Mammary epithelial cell (primary cell): ENCODE measurements at regions of chr12 and their contacts with region 1.

Region 1: GRCh38 chr12:96516472-96517430 is 27.4 kb downstream of the CFAP54 start:
- DNase-seq: peak; percentile 56
- H3K4me3 ChIP-seq: no peak overlapping the region
- H3K27ac ChIP-seq: no peak overlapping the region
- H3K4me1 ChIP-seq: no peaks in the 10 kb centered on the region
- H3K27me3 ChIP-seq: no peaks in the 10 kb centered on the region
- CTCF ChIP-seq: peak; percentile 51 to 58

Region 2: DNA sequence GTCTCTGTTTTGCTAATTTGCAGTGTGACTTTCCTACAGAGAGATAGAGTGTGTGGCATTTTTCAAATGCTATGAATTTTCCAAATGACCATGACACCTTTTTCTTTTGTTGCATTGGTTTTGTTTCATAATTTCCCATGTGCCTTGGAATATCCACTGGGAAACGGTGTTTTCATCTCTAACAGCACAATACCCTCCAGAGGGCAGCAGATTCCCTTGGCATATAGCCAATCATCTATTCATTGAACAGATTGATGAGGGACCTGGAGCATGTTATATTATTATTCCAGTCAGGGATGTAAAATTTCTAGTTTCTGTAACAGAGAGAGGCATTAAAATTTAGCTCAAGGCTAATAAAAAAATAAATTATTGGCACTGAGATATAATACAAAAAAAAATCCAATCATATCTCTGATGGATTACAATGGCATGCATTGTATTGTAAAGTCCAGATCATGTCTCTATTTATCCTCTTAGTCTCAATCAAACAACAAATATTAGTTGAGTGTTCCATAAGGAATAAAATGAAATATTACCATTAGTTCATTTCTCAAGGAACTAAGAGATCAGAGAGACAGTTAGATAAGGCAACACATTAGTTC is 696.5 kb before region 1 on chr12:
- CTCF ChIA-PET with region 1: no interaction called
- dilution Hi-C with region 1: no loop called
- in situ Hi-C with region 1: no loop called
- intact Hi-C with region 1: loop called (anchors 2 kb)
- DNase-seq: peak; percentile 41
- H3K4me3 ChIP-seq: no peak overlapping the region
- H3K27ac ChIP-seq: no peak overlapping the region
- H3K4me1 ChIP-seq: no peaks in the 10 kb centered on the region
- H3K27me3 ChIP-seq: peaks cover 3% of the 10 kb centered on the region
- CTCF ChIP-seq: peak; percentile 53 to 72

Region 3: DNA sequence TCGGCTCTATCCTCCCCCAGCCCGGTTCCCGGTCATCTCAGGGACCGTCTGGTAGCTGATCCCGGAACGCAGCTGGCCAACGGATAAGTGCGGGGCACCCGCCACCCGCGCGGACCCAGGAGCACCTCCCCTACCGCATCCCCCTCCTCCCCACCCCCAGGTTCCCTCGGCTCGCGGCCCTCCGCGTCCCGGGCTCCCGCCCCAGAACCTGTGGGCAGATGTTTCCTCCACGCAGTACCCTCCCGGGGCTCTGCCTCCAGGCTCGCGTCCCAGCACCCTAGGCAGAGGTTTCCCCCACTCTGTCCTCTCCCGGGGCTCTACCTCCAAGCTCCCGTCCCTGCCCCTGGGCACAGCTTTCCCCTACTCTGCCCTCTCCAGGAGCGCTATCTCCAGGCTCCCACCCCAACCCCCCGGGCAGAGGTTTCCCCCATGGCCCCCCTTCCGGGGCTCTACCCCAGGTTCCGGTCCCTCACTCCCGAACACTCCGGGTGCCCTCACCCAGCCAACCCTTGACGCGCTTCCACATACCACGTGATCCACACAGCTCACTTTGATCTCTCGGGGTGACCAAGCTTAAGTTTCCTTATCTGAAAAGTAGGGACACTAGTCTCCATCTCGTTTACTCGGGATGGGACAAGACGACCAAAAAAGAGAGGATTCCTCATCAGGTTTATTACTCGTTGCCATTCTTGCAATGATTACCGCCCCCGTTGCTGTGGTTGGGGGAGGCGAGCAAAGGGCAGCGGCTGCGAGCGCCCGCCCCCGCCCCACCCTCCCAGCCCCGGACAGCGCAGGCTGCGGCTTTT is 574.0 kb before region 1 on chr12 and contains the start of gene CCDC38:
- CTCF ChIA-PET with region 1: no interaction called
- dilution Hi-C with region 1: no loop called
- in situ Hi-C with region 1: loop called in 1 of 2 experiments (anchors 25 kb)
- intact Hi-C with region 1: no loop called
- DNase-seq: peak; percentile 77
- H3K4me3 ChIP-seq: peak within 1 kb of the TSS; percentile 57 to 85 (median 74)
- H3K27ac ChIP-seq: peak within 1 kb of the TSS; percentile 59
- H3K4me1 ChIP-seq: peaks cover 4% of the 10 kb centered on the region
- H3K27me3 ChIP-seq: no peaks in the 10 kb centered on the region
- CTCF ChIP-seq: no peak
- total RNA-seq, gene CCDC38: 0.17 TPM in 1 of 2 donors, not detected in the other

Region 4: DNA sequence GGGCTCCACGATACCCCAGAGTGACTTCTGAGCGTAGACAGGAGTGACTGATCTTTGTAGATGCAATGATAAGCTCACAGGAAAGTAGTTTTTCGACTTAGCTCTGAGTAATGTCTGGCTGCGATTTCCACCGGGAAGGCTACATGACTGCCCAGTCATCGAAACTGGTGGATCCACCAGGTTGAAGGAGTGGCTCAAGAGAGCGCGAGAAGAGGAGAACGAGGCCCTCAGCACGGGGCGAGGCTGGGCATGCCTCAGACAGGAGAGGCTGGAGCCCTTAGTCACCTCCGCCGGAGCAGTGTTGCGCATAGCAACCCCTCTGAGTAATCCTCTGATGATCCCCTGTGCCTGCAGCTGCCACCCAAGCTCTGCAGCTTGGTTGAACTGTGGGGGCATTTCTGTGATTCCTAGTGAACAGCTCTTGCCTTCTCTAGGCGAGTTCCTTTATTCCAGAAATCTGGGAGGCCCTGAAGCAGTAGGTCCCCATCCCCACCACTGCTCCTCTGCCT is 297.0 kb before region 1 on chr12:
- CTCF ChIA-PET with region 1: interaction called, 13 read pairs
- dilution Hi-C with region 1: no loop called
- in situ Hi-C with region 1: loop called in 1 of 2 experiments (anchors 25 kb)
- intact Hi-C with region 1: loop called (anchors 1 kb)
- DNase-seq: peak; percentile 100
- H3K4me3 ChIP-seq: peak overlapping the region; percentile 30 to 41 (median 38)
- H3K27ac ChIP-seq: peak overlapping the region; percentile 100
- H3K4me1 ChIP-seq: peaks cover 57% of the 10 kb centered on the region
- H3K27me3 ChIP-seq: no peaks in the 10 kb centered on the region
- CTCF ChIP-seq: no peak

Region 5: DNA sequence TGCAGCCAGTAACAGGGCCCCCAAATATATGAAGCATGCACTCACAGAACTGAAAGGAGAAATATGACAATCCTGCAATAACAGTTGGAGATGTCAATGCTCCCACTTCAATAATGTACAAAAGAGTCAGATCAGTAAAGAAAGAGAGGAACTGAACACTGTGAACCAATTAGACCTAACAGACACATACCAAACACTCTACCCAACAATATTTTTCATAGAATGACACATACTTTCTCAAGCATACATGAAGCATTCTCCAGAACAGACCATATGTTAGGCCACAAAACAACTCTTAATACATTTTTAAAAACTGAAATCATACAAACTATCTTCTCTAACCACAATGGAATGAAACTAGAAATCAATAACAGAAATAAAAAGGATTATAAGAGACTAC is 242.4 kb before region 1 on chr12:
- CTCF ChIA-PET with region 1: no interaction called
- dilution Hi-C with region 1: no loop called
- in situ Hi-C with region 1: no loop called
- intact Hi-C with region 1: loop called (anchors 10 kb)
- DNase-seq: peak; percentile 24
- H3K4me3 ChIP-seq: no peak overlapping the region
- H3K27ac ChIP-seq: no peak overlapping the region
- H3K4me1 ChIP-seq: no peaks in the 10 kb centered on the region
- H3K27me3 ChIP-seq: no peaks in the 10 kb centered on the region
- CTCF ChIP-seq: no peak

Region 6: DNA sequence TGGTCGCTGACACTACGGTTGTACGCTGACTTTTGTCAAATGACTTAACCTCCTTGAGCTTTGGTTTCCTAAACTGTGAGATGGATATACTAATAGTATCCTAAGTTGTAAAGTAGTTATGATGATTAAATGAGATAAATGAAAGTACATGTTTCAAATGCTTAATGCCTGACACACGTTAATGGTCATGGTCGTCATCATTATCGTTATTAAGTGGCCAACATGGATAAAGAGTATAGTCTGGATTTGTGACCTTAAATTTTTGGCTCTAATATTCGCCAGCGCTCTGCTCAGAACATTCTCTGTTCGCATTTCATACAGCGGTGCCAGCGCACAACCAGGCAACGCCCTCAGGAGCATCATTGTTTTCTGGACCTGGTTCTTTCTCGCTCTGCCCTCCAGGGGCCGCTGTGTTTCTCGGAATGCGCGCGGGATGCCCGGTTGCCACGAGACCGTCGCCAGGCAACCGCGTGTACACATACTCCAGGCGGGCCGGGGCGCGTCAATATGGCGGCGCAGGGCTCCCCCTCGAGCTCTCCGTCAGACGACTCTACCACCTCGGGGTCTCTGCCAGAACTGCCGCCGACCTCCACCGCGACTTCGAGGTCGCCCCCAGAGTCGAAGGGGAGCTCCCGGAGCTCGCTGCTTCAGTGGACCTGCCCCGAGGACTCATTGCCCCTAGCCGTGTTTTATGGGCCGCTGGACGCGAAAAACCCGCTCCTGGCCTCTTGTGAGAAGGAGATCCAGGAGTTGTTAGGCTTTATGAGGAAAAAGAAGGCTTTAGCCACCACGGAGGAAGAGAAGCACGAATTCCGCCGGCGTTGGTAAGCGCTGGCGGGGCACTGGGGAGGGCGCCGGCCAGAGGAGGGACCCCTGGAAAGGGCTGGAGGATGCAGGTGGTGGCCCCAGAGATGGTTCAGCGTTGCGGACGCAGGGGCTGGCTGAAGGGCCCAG is 27.4 kb before region 1 on chr12 and contains the start of gene CFAP54:
- CTCF ChIA-PET with region 1: no interaction called
- dilution Hi-C with region 1: no loop called
- in situ Hi-C with region 1: no loop called
- intact Hi-C with region 1: loop called (anchors 1 kb)
- DNase-seq: peak; percentile 92
- H3K4me3 ChIP-seq: peak within 1 kb of the TSS; percentile 59 to 72 (median 63)
- H3K27ac ChIP-seq: peak within 1 kb of the TSS; percentile 91
- H3K4me1 ChIP-seq: peaks cover 38% of the 10 kb centered on the region
- H3K27me3 ChIP-seq: no peaks in the 10 kb centered on the region
- CTCF ChIP-seq: peak; percentile 73 to 89
- total RNA-seq, gene CFAP54: 1.5 to 1.6 TPM